HEK293 (cell line): ENCODE measurements at regions of chr1 and their contacts with region 1.

Region 1: DNA sequence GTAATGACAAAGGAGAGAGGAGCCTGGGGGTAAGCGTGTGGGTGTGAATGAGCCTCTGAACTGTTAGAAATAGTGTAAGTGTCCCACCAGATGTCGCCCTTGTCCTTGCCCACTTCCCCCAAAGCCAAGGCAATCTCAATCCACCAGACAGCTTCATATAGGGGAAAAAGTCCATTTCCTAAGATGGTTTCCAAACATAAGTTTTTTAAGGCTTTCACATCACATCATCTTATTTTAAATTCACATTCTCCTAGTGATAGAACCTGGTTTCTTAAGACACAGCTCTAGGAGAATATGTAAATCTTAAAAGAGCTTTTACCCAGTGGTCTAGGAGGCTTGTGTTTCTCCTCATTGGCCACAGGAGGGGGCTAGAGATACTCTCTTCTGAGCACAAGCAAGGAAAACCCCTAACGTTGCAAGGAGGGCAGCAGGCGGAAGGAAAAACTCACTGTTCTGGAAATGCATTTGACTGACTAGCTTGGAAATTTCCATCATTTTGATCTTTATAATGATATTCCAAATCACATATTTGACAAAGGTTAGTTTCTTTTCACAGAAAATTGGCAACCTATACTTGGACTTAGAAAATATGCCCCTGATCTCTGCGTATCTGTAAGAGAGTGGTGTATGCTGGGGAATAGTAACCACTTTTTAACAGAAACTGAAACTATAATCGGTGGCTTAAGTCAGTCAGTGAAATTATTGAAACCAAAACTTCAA is 51.9 kb upstream of the LPAR3 start:
- H3K4me3 ChIP-seq: no peak overlapping the region
- H3K27ac ChIP-seq: no peak overlapping the region
- H3K4me1 ChIP-seq: no peaks in the 10 kb centered on the region
- CTCF ChIP-seq: peak; percentile 86

Region 2: GRCh38 chr1:84869720-84870119 is 75.2 kb before region 1 on chr1:
- CTCF ChIA-PET with region 1: no interaction called
- POLR2A ChIA-PET with region 1: no interaction called
- H3K4me3 ChIP-seq: no peak overlapping the region
- H3K27ac ChIP-seq: no peak overlapping the region
- H3K4me1 ChIP-seq: peaks cover 2% of the 10 kb centered on the region; the same call in 1 of the 2 replicates
- CTCF ChIP-seq: no peak

Region 3: DNA sequence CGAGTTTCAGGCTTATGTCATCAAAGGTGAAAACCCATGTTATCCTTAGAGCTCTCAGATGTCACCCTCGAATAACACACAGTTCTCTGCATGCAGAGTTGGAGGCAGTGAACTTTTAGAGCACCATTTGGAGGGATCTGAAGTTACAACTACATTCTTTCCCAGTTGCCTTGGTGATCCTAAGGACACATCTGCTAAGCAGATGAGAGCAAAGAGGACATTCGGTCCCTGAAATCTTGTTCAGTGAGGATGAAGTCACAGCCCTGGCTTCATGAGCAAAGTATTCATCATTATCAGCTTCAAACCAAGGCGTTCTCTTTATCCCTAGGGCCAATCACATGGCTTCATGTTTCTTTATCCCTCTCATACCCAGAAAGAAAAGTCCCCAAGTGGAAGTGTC is 75.1 kb after region 1 on chr1:
- CTCF ChIA-PET with region 1: interaction called, 59 read pairs
- POLR2A ChIA-PET with region 1: no interaction called
- H3K4me3 ChIP-seq: no peak overlapping the region
- H3K27ac ChIP-seq: no peak overlapping the region
- H3K4me1 ChIP-seq: no peaks in the 10 kb centered on the region
- CTCF ChIP-seq: no peak

Region 4: DNA sequence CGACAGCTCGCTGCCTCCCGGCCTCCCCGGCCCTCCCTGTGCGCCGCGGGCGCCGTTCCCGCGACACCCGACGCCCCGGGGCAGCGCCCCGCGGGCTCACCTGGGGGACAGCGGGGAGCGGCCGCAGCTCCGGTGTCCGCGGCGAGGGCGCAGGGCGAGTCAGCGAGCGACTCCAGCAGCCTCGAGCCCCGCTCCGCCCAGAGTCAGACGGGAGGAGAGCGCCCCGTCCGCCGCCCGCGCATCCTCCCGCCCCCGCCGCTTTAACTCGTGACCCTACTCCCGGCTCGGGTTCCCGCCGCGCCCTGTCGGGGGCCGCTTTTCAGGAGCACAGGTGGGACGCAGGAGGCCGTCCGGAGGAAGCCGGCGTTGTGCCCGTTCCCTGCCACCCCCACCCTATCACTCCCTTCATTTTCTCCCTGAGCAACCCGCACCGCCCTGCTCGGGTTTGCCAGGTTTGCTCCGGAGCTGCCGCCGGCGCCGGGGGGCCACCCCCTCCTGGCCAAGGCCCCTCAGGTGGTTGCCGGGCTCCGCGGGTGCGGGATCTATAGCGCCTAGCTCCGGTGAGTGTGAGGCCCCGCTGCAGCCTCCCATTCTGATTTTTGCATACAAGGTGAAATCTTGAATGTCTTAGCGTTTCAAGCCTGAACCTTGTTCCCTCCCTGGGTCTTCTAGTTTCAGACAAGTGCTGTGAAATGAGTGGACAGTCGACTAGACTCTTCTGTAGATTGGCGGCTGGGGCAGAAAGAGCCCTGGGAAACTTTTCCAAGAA is 103.6 kb after region 1 on chr1 and contains the start of gene MCOLN3:
- CTCF ChIA-PET with region 1: interaction called, 11 read pairs
- POLR2A ChIA-PET with region 1: no interaction called
- H3K4me3 ChIP-seq: peak within 1 kb of the TSS; percentile 62
- H3K27ac ChIP-seq: peak within 1 kb of the TSS; percentile 85
- H3K4me1 ChIP-seq: peaks cover 8% of the 10 kb centered on the region
- CTCF ChIP-seq: peak; percentile 60

Region 5: DNA sequence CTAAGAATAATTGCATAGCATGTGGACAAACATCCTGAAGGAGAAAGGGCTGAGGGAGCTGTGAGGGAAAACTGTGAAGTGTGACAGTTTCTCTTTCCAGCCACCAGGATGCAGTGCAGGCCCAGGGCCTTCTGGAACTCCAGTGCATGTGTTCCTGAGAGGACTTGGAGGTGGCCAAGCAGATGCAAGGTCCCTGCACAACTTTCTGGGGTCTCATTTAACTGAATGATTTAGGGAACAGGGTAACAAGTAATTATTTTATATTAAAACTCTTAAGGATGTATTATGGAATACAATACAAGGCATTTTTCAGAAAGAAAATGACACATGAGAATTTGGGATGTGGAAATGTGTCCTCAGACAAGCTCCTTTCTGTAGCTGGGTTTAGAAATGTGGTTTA is 164.5 kb after region 1 on chr1:
- CTCF ChIA-PET with region 1: interaction called, 35 read pairs
- POLR2A ChIA-PET with region 1: no interaction called
- H3K4me3 ChIP-seq: no peak overlapping the region
- H3K27ac ChIP-seq: no peak overlapping the region
- H3K4me1 ChIP-seq: no peaks in the 10 kb centered on the region
- CTCF ChIP-seq: peak; percentile 74

Region 6: DNA sequence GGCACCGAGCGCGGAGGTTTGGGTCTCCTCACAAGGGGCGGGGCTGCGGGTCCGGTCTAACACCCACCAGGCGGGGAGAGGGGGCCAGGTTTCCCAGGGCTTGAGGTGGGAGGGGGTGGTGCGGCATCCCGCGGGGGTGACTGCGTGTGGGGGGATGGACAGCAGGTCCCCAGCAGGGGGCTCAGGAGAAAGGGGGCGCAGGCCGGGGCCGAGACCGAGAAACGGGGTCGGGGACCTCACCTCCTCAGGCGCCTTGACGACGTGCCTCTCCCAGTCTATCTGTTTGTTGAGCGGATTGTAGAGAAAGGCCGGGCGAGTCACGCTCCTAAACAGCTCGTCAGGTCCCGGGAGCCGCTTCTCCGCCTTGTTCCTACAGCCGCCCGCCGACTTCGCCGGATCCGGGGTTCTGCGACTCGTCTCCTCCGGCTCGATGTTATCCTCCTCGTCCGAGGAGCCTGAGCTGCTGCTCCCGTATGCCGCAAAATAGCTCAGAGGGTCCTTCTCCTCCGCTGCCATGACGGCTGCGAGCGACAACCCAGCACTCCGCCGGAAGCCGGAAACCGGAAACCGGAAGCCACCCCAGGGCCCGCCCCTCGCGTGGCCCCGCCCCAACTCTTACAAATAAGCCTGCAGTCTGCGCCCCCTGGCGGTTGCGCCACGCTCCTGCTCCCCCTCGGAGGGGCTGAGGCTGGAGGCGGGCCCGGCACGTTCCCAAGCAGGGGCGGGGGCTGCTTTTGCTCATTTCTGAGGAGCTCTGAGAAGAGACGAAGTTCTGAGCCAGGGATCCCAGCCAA is 314.4 kb after region 1 on chr1 and contains the start of gene C1orf52:
- CTCF ChIA-PET with region 1: interaction called, 206 read pairs
- POLR2A ChIA-PET with region 1: interaction called, 6 read pairs
- H3K4me3 ChIP-seq: peak within 1 kb of the TSS; percentile 94
- H3K27ac ChIP-seq: peak within 1 kb of the TSS; percentile 67
- H3K4me1 ChIP-seq: 0 out of 2 replicates have a peak, but pooled peaks cover 2% of the 10 kb centered on the region
- CTCF ChIP-seq: peak; percentile 78